GM10248 (cell line): ENCODE measurements at regions of chr16 and their contacts with region 1.

Region 1: GRCh38 chr16:96935-97381 is 18.9 kb downstream of the MPG start:
- DNase-seq: peak; percentile 98
- CTCF ChIP-seq: peak; percentile 100

Region 2: GRCh38 chr16:38939-39892 is 57.7 kb before region 1 on chr16:
- CTCF ChIA-PET with region 1: interaction called, 11 read pairs
- POLR2A ChIA-PET with region 1: no interaction called
- DNase-seq: peak; percentile 89
- CTCF ChIP-seq: no peak

Region 3: GRCh38 chr16:53346-54236 is 43.4 kb before region 1 on chr16 and contains the starts of genes POLR3K and SNRNP25:
- CTCF ChIA-PET with region 1: interaction called, 701 read pairs
- POLR2A ChIA-PET with region 1: no interaction called
- DNase-seq: peak; percentile 99
- CTCF ChIP-seq: no peak

Region 4: DNA sequence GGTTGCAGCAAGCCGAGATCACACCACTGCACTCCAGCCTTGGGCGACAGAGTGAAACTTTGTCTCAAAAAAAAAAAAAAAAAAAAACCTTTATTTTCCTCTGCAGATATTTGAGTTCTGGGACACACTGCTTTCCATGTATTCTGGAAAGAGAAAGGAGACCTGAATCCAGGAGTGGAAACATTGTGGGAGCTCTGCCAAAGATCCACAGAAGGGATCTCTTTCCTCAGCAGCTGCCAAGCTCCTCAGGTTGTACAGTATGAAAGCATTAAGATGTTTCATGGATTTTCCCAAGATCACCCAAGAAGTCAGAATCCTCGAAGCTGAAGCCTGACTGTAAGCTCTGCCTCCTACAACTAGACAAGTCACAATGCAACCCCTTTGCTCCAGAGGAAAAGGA is 28.1 kb after region 1 on chr16:
- CTCF ChIA-PET with region 1: interaction called, 10 read pairs
- POLR2A ChIA-PET with region 1: no interaction called
- DNase-seq: no peak
- CTCF ChIP-seq: no peak

Region 5: DNA sequence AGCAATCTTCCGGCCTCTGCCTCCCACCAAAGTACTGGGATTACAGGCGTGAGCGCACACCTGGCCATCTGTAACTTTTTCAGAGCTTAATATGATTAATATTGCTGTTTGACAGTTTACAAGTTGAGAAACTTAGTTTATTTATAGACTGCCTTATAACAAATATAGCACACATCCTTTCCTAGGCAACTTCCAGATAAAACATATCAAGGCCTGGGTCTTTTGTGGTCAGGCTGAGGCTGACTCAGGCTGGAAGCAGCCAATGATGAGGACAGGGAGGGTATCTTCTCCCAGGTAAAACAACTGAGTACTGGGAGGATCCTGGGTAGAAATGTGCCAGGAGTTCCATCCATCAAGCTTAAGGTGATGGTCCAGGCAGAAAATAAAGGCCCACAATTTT is 116.0 kb after region 1 on chr16:
- CTCF ChIA-PET with region 1: interaction called, 10 read pairs
- POLR2A ChIA-PET with region 1: no interaction called
- DNase-seq: no peak
- CTCF ChIP-seq: no peak